Activated CD8-positive, alpha-beta memory T cell treated with anti-CD3 and anti-CD28 coated beads, Interleukin-2, amount 10 ng/mL, durations not matched to agents 7 days and 5 days (primary cell): ENCODE measurements at regions of chr12 and their contacts with region 1.

Region 1: DNA sequence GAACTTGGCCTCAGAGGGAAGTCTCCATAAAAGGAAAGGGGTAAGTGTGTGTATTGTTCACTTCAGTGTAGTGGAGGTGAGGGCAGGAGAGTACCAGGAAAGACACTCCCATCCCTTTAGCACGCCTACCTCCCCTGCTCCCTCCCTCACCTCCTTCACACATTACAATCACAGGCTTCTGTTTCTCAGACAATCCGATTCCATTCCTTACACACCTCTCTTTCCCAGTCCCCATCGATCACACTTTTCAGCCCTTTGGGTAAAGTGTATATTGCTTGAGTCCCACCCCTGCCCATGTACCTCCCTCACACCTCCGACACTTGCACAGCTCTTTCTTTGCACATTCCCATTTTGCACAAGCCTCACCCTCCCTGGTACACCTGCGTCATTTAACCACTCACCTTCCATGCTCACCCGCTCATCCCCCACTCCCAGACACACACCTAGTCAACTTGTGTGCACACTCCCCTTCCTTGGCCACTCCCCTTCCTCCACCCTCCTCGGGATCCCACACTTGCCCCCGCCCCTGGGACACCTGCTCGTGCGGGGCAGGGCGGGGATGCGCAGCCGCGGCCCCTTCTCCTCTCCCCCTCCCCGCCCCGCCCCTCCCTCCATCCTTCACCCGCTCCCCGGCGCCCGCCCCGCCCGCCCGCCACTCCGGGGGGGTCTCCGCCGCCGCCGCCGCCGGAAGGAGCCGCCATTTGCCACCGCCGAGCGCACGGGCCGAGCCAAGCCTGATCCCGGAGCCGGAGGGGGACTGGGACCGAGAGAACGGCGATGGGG is at the start of gene MARCHF9:
- DNase-seq: peak; percentile 90
- ATAC-seq: peak; percentile 49
- H3K4me3 Mint-ChIP-seq: peak within 1 kb of the TSS; percentile 82
- H3K27ac Mint-ChIP-seq: peak within 1 kb of the TSS; percentile 81
- H3K4me1 Mint-ChIP-seq: peaks cover 56% of the 10 kb centered on the region
- H3K27me3 Mint-ChIP-seq: no peaks in the 10 kb centered on the region
- total RNA-seq, gene MARCHF9: 21.0 to 24.9 TPM

Region 2: DNA sequence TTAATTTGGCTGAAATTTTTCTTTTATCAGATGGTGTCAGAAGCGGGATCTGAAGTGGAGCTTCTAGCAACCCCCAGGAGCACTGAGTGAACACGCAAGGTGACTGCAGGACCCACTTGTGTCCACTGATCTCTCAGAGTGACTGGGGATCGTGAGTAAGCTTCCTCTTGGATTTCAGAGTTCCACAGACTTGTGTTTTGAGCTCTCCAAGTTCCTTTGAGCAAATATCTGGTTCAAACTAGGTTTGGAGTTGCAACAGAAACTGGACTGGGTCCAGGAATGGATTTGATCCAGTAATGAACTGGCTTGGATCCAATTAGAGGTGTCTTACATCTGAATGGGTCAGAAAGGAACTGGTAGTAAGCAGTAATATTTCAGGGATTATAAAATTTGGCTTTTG is 96.9 kb before region 1 on chr12:
- CTCF ChIA-PET with region 1: no interaction called
- DNase-seq: no peak
- ATAC-seq: no peak
- H3K4me3 Mint-ChIP-seq: no peak overlapping the region
- H3K27ac Mint-ChIP-seq: no peak overlapping the region
- H3K4me1 Mint-ChIP-seq: no peaks in the 10 kb centered on the region
- H3K27me3 Mint-ChIP-seq: peaks cover 5% of the 10 kb centered on the region

Region 3: DNA sequence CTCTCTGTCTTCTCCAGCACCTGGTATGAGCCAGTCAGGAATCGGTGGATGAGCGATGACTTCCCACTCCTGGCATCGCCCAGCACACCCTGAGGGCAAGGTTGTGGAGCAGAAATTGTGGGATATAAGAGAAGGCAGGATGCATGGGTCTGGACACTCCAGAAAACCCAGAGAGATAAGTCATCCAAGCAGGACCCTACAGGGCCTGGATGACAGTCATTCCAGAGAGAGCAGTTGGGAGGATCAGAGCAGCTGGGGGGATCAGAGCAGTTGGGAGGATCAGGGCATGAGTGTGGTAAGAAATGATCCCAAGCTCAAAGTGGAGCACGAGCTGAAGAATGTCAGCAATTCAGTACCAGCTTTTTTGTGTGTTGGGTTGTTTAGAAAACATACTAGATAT is 20.0 kb before region 1 on chr12:
- CTCF ChIA-PET with region 1: no interaction called
- DNase-seq: no peak
- ATAC-seq: no peak
- H3K4me3 Mint-ChIP-seq: no peak overlapping the region
- H3K27ac Mint-ChIP-seq: peak overlapping the region; percentile 9
- H3K4me1 Mint-ChIP-seq: peaks cover 8% of the 10 kb centered on the region
- H3K27me3 Mint-ChIP-seq: no peaks in the 10 kb centered on the region

Region 4: GRCh38 chr12:57765042-57765697 is 10.6 kb after region 1 on chr12:
- CTCF ChIA-PET with region 1: interaction called, 48 read pairs
- DNase-seq: peak; percentile 72
- ATAC-seq: peak; percentile 80
- H3K4me3 Mint-ChIP-seq: peak overlapping the region; percentile 80
- H3K27ac Mint-ChIP-seq: peak overlapping the region; percentile 69
- H3K4me1 Mint-ChIP-seq: peaks cover 28% of the 10 kb centered on the region
- H3K27me3 Mint-ChIP-seq: peaks cover 15% of the 10 kb centered on the region

Region 5: GRCh38 chr12:57771708-57772428 is 17.3 kb after region 1 on chr12 and contains the start of gene METTL1:
- CTCF ChIA-PET with region 1: interaction called, 48 read pairs
- DNase-seq: peak; percentile 97
- ATAC-seq: peak; percentile 92
- H3K4me3 Mint-ChIP-seq: peak within 1 kb of the TSS; percentile 99
- H3K27ac Mint-ChIP-seq: peak within 1 kb of the TSS; percentile 98
- H3K4me1 Mint-ChIP-seq: peaks cover 26% of the 10 kb centered on the region
- H3K27me3 Mint-ChIP-seq: peaks cover 1% of the 10 kb centered on the region
- total RNA-seq, gene METTL1: 22.1 to 32.1 TPM

Region 6: GRCh38 chr12:57782608-57783465 is 28.2 kb after region 1 on chr12 and contains the start of gene TSFM:
- CTCF ChIA-PET with region 1: interaction called, 20 read pairs
- DNase-seq: peak; percentile 97
- ATAC-seq: peak; percentile 93
- H3K4me3 Mint-ChIP-seq: peak within 1 kb of the TSS; percentile 97
- H3K27ac Mint-ChIP-seq: peak within 1 kb of the TSS; percentile 96
- H3K4me1 Mint-ChIP-seq: peaks cover 38% of the 10 kb centered on the region
- H3K27me3 Mint-ChIP-seq: no peaks in the 10 kb centered on the region
- total RNA-seq, gene TSFM: 32.2 to 45.8 TPM

Region 7: DNA sequence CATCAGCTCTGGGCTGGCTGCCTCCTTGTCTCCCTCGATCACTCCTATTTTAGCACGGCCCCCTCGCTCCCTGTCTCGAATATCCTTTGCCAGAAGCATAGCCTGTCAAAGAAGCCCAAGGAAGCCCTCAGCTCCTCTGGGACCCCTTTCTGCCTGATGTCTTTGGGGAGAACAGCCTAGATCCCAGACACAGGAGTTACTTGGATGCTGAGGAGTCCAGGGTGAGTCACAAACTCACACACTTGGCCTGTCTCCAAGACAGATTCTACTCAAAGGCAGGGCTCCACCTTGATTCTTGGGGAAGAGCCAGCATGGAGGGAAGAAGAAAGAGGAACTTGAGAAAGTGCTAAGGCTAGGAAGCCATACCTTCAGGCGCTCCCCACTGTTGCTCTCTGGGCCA is 55.8 kb after region 1 on chr12:
- CTCF ChIA-PET with region 1: no interaction called
- DNase-seq: no peak
- ATAC-seq: no peak
- H3K4me3 Mint-ChIP-seq: no peak overlapping the region
- H3K27ac Mint-ChIP-seq: no peak overlapping the region
- H3K4me1 Mint-ChIP-seq: no peaks in the 10 kb centered on the region
- H3K27me3 Mint-ChIP-seq: no peaks in the 10 kb centered on the region